Adrenal gland (tissue), 19 donors: ENCODE measurements at regions of chr13 and their contacts with region 1.

Region 1: GRCh38 chr13:79423801-79424642 is 18.0 kb upstream of the RBM26 start:
- DNase-seq: no peak
- H3K4me3 ChIP-seq: no peak overlapping the region
- H3K27ac ChIP-seq: no peak overlapping the region
- H3K4me1 ChIP-seq: no peaks in the 10 kb centered on the region
- H3K27me3 ChIP-seq: no peaks in the 10 kb centered on the region
- CTCF ChIP-seq: peak; percentile 55 to 82 (median 75)
- POLR2A ChIP-seq: no peak

Region 2: GRCh38 chr13:79480954-79481684 is 57.1 kb after region 1 on chr13 and contains the start of gene NDFIP2:
- intact Hi-C with region 1: loop called in 1 of 2 experiments (anchors 10 kb)
- DNase-seq: peak; percentile 81 to 91 (median 87)
- H3K4me3 ChIP-seq: peak within 1 kb of the TSS; percentile 44 to 90 (median 72)
- H3K27ac ChIP-seq: peak within 1 kb of the TSS in 4 of 5 donors; percentile 42 to 85 (median 80)
- H3K4me1 ChIP-seq: peaks cover 5 to 26% of the 10 kb centered on the region in 2 donors
- H3K27me3 ChIP-seq: no peaks in the 10 kb centered on the region
- CTCF ChIP-seq: peak in 2 of 6 experiments; percentile 5 to 27
- POLR2A ChIP-seq: peak; percentile 42 to 79
- total RNA-seq, gene NDFIP2: 16.4 to 62.1 (median 40.7) TPM

Region 3: DNA sequence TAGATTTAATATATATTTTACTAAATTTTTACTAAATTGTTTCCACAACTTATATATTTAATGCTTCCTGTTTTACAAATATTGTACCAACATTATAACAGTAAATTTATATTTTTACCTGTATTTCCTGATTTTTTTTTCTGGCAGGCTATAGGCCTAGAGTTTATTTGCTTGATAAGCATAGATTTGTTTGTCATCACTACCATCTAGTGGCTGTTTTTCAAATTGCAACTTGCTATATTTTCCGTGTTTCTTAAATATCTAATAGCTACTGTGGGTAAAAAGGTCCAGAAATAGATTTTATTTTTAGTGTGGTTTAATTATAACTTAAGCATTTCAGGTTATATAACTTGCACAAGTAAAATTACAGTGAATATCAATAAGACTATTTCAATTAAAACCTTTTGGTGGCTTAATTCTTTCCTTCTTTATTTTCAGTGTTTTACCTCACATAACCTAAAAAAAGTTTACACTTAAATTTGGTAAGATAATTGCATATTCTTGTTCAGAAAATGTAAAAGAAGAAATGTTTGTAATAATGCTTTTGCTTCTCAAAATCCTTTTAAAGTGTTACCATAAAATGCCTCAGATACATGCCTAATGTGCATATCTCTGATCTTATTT is 117.5 kb after region 1 on chr13:
- intact Hi-C with region 1: loop called in 1 of 2 experiments (anchors 5 kb)
- DNase-seq: no peak
- H3K4me3 ChIP-seq: no peak overlapping the region
- H3K27ac ChIP-seq: no peak overlapping the region
- H3K4me1 ChIP-seq: no peaks in the 10 kb centered on the region
- H3K27me3 ChIP-seq: no peaks in the 10 kb centered on the region
- CTCF ChIP-seq: peak; percentile 81 to 98 (median 88)
- POLR2A ChIP-seq: no peak